Activated CD4-positive, alpha-beta T cell treated with anti-CD3 and anti-CD28 coated beads, Interleukin-2, amount 10 ng/mL, durations not matched to agents 24 days and 14 days (primary cell): ENCODE measurements at regions of chr13 and their contacts with region 1.

Region 1: DNA sequence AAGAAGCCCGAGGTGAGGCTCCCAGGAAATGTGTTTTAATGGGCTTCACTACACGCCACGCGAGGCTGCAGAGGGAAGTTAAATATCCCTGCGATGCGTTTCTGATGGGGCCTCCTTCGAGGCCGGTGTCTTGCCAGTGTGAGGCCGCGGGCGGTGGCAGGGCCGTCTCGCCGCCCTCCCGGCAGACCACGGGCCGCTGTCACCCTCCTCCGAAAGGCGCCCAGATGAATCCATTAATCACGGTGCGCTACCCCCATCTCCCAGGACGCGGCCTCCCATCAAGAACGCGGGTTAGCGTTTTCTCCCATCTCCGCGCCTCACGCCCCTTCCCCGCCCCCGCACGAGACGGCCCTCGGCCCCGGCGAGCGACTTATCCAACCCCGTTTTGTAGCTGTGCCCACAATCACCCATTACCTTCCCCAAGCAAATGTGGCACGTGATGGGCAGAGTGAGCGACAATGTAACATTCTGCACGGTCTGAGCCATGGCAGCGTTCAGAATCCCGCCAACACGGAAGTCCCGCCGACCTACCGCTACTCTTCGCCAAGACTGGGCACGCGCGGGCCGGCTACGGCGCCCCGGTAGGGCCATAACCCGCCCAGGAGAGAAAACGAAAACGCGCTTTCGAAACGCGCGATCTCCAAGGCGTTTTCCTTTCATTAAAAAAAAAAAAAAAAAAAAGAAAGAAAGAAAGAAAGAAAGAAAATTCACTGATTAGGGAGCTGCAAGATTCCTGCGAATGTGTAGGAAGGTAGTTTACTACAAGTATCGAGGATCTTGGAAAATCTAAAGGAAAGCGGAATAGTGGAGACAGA is at the start of gene OBI1:
- DNase-seq: peak; percentile 97
- H3K4me3 Mint-ChIP-seq: peak within 1 kb of the TSS; percentile 100
- H3K27ac Mint-ChIP-seq: peak within 1 kb of the TSS; percentile 99
- H3K4me1 Mint-ChIP-seq: peaks cover 30% of the 10 kb centered on the region
- H3K27me3 Mint-ChIP-seq: no peaks in the 10 kb centered on the region
- total RNA-seq, gene OBI1: 21.4 and 22.6 TPM in 2 replicates

Region 2: DNA sequence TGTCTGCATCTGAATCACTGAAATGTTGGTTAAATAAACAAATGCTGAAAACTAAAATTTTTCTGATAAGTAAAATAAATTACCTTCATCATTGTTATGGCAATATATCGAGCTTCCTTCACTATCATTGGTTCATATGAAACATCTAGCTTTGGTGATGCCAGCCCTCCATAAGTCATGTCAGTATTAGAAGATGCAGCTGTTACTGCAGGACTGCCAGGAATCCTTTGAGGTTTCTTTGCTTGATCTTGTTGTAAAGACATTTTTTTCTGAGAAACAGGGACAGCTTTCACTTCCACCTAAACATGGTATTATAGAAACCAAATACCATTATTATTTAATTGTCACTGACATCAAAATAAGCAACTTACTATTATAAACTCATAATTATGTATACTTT is 1508.2 kb before region 1 on chr13:
- intact Hi-C with region 1: loop called (anchors 10 kb)
- DNase-seq: no peak
- H3K4me3 Mint-ChIP-seq: no peak overlapping the region
- H3K27ac Mint-ChIP-seq: no peak overlapping the region
- H3K4me1 Mint-ChIP-seq: peaks cover 7% of the 10 kb centered on the region
- H3K27me3 Mint-ChIP-seq: no peaks in the 10 kb centered on the region

Region 3: GRCh38 chr13:78603240-78603957 is 55.4 kb before region 1 on chr13 and contains the start of gene POU4F1:
- intact Hi-C with region 1: loop called (anchors 2 kb)
- DNase-seq: peak; percentile 91
- H3K4me3 Mint-ChIP-seq: peak within 1 kb of the TSS; percentile 80
- H3K27ac Mint-ChIP-seq: peak within 1 kb of the TSS; percentile 76
- H3K4me1 Mint-ChIP-seq: peaks cover 31% of the 10 kb centered on the region
- H3K27me3 Mint-ChIP-seq: peaks cover 88% of the 10 kb centered on the region
- total RNA-seq, gene POU4F1: 0.12 and 0.14 TPM in 2 replicates

Region 4: GRCh38 chr13:78618411-78618810 is 40.4 kb before region 1 on chr13:
- intact Hi-C with region 1: loop called (anchors 5 kb)
- DNase-seq: no peak
- H3K4me3 Mint-ChIP-seq: no peak overlapping the region
- H3K27ac Mint-ChIP-seq: no peak overlapping the region
- H3K4me1 Mint-ChIP-seq: peaks cover 6% of the 10 kb centered on the region
- H3K27me3 Mint-ChIP-seq: no peaks in the 10 kb centered on the region

Region 5: GRCh38 chr13:79194272-79194671 is 535.4 kb after region 1 on chr13:
- intact Hi-C with region 1: loop called (anchors 5 kb)
- DNase-seq: peak; percentile 89
- H3K4me3 Mint-ChIP-seq: peak overlapping the region; percentile 60
- H3K27ac Mint-ChIP-seq: peak overlapping the region; percentile 39
- H3K4me1 Mint-ChIP-seq: peaks cover 50% of the 10 kb centered on the region
- H3K27me3 Mint-ChIP-seq: peaks cover 2% of the 10 kb centered on the region

Region 6: GRCh38 chr13:79393564-79394249 is 734.9 kb after region 1 on chr13:
- intact Hi-C with region 1: loop called (anchors 5 kb)
- DNase-seq: peak; percentile 78
- H3K4me3 Mint-ChIP-seq: peak overlapping the region; percentile 80
- H3K27ac Mint-ChIP-seq: peak overlapping the region; percentile 83
- H3K4me1 Mint-ChIP-seq: peaks cover 47% of the 10 kb centered on the region
- H3K27me3 Mint-ChIP-seq: no peaks in the 10 kb centered on the region

Region 7: GRCh38 chr13:79549355-79550106 is 890.7 kb after region 1 on chr13:
- intact Hi-C with region 1: loop called (anchors 10 kb)
- DNase-seq: no peak
- H3K4me3 Mint-ChIP-seq: no peak overlapping the region
- H3K27ac Mint-ChIP-seq: no peak overlapping the region
- H3K4me1 Mint-ChIP-seq: peaks cover 3% of the 10 kb centered on the region
- H3K27me3 Mint-ChIP-seq: no peaks in the 10 kb centered on the region